ENCODE measurements at regions of chr5 and their contacts with region 1.

Region 1: DNA sequence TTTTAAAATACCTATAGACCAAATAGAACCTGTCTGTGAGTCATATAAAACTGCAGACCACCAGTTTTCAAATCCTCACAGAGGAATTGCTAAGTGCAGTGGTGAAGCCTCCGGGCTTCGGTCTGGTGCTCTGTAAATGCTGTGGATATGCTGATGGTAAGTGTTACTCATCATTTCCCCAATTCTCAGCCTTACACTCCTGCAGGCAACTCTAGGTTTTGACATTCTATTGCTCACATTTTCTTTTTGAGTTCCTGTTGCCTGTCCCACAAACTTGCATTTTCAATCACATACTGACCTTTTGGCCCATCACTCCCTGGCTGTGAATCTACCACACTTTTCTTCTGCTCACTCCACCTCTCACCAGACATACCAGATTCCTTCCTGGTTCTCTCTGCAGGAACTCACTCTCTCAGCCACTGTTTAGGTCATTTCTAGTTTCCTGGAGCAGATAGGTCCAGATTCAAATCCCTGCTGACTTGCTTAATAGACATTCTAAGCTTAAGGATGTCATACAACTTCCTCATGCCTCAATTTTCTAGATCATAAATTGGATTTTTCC is 192.9 kb downstream of the RAB3C start:
- DNase-seq: no peak
- H3K4me3 Mint-ChIP-seq: no peak overlapping the region
- H3K27ac Mint-ChIP-seq: no peak overlapping the region
- H3K4me1 Mint-ChIP-seq: peaks cover 9% of the 10 kb centered on the region
- H3K27me3 Mint-ChIP-seq: peaks cover 17% of the 10 kb centered on the region

Region 2: DNA sequence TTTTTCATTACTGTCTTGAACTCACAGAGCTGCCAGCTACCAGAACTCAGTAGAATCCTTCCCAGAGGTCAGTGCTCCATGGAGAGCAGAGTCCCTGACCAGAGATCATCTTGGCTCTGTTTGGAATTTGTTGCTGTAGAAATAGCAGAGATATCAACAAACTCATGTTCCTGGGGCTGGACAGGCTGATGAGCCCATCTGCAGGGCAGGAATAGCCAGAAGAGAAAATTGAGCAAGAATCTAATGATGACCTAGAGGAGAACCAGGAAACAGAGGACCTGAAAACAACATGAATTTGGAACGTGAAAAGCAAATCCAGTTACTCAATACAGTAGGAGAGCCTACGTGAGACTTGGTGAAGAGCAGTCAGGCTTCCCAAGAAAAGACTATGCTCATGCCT is 753.7 kb before region 1 on chr5:
- CTCF ChIA-PET with region 1: no interaction called
- intact Hi-C with region 1: no loop called
- DNase-seq: no peak
- H3K4me3 Mint-ChIP-seq: no peak overlapping the region
- H3K27ac Mint-ChIP-seq: no peak overlapping the region
- H3K4me1 Mint-ChIP-seq: no peaks in the 10 kb centered on the region
- H3K27me3 Mint-ChIP-seq: no peaks in the 10 kb centered on the region

Region 3: DNA sequence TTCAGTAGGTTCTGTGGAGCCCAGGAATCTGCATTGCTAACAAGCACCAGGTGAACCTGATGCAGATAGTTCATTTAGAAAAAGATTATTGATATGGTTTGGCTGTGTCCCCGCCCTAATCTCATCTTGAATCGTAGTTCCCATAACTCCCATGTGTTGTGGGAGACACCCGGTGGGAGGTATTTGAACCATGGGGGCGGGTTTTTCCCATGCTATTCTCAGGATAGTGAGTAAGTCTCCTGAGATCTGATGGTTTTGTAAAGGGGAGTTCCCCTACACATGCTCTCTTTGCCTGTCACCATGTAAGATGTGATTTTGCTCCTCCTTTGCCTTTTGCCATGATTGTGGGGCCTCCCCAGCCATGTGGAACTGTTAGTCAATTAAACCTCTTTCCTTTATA is 19.1 kb after region 1 on chr5:
- CTCF ChIA-PET with region 1: interaction called, 4 read pairs
- intact Hi-C with region 1: loop called (anchors 1 kb)
- DNase-seq: peak; percentile 84
- H3K4me3 Mint-ChIP-seq: no peak overlapping the region
- H3K27ac Mint-ChIP-seq: no peak overlapping the region
- H3K4me1 Mint-ChIP-seq: peaks cover 6% of the 10 kb centered on the region
- H3K27me3 Mint-ChIP-seq: peaks cover 5% of the 10 kb centered on the region

Region 4: DNA sequence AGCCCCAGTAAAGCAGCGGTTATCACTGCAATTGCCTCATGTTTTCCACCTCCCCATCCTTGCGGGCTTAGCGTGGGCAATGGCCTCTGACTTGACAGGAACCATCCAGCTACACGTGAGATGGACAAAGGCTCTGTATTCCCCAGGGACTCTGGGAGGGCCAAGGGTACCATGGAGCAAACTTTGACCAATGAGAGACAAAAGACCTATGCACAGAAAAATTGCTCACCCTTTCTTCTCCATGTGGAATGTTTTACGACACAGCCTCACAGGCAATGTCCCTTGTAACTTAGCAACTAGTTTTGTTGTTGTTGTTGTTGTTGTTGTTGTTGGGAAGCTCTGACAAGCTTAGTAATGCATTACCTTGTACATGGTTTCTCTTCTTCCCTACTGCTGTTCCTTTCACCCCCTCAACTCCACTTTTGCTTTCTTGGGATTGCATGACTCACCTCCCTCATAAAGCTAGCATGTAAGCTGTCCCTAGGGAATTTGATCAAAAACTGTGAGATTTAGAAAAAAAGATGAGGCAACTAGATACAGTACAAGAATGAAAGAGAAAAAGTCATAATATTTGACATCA is 358.0 kb after region 1 on chr5:
- CTCF ChIA-PET with region 1: no interaction called
- intact Hi-C with region 1: no loop called
- DNase-seq: no peak
- H3K4me3 Mint-ChIP-seq: no peak overlapping the region
- H3K27ac Mint-ChIP-seq: no peak overlapping the region
- H3K4me1 Mint-ChIP-seq: peaks cover 31% of the 10 kb centered on the region
- H3K27me3 Mint-ChIP-seq: no peaks in the 10 kb centered on the region